Cardiac septum (tissue), 1 donor: ENCODE measurements at regions of chr15 and their contacts with region 1.

Region 1: DNA sequence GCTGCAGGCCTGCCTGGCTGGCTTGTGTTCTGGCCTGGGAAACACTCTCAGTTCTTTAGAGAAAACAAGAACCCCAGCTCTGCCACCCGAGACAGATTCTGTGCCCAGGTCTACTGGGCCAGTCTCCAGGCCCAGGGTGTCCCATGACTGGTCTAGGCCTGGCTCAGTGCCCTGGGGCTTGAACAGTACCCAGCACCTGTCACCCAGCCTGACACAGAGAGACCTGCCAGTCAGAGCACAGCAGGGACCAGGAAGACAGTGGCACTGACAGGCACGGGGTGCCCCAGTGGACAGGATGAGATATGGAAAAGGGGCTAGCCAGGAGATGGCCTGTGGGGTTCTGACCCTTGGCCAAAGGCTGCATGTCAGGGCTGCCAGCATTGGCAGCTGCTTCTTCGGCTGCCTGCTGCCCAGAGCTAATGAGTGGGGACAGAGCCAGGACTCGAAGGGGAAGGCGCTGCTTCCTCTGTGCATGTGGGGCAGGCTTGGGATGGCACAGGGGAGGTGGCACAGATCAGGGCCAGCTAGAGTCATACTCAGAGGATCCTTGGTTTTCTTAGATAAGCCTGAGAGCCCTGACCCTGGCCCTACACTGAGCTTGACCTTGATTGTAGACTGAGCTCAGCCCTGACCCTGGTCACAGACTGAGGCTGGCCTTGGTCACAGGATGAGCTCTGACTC is 15.1 kb downstream of the CCDC33 start:
- DNase-seq: peak; percentile 89

Region 2: DNA sequence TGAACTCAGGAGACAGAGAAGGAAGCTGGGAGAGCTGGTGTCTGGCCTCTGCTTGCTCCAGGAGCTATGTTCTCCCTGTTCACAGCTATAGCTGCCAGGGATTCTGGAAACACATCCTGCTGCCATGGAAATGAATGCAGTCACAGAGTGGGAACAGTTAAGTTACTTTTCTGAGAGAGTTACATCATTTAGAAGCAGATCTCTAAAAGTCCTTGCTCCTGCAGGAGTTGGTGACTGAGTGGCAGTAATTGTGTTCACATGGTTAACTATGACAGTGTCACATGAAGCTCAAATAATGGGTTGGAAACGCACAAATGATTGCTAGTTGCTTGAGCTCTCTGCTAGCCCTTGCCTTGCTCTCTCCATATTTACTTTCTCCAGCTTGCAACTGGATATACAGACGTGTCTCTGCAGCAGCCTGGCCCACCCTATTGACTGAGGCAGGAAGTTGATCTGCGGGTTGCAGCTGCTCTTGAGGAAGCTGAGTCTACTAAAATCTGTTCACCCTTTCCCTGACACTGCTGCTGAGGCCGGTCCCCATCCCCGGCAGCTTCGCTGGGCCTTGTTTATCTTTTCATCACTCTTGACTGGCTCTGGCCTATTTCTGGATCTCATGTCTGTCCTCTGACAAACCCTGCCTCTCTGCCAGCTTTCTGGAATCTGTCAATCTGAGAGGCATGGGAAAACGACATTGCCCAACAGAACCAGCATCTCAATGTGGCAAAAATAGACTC is 94.4 kb before region 1 on chr15:
- intact Hi-C with region 1: loop called (anchors 5 kb)
- DNase-seq: peak; percentile 76

Region 3: DNA sequence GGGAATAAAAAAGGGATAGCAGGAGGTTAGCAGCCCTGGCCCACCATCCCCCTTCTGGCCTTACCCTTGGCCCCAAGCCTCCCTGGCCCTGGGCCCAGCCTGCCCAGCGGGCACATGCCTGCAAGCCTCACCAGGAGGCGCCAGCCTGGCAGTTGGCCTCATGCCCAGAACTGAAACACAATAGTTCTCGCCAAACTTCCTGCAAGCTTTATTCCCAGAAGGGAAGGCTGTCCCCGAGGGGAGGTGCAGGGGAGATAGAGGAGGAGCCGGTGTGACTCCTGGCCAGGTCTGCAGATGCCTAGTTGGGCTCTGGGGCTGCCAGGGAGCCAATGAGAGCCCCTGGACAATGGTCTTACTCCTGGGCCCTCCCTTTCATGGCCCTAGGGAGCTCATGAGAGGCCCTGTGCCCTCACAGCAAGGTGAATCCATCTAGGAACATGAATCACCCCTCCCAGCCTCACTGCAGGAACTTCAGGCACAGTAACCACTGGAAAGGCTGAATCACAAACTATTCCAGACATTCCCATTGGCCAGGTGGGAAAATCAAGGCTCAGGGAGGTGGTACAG is 11.2 kb before region 1 on chr15:
- intact Hi-C with region 1: loop called (anchors 1 kb)
- DNase-seq: peak; percentile 91